Cardiac septum (tissue), 1 donor: ENCODE measurements at regions of chr1 and their contacts with region 1.

Region 1: DNA sequence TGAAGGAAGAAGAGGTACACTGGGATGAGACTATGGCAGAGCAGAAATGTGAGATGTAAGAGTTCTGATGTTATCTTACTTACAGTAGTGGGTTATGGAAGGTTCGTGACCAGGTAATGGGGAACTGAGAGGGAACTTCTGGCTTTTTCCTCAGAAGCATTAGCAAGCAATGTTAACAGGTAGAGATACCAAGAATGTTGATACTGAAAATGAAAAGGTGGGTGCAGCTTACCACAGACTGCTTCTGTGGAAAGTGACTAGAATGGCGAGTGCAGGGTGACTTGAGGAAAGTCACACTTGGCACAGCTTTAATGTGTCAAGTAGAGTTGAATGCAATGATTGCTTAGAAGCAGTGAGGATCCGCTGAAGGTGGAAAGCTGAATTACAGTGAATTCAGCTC is 70.8 kb downstream of the PLA2G4A start:
- DNase-seq: no peak

Region 2: GRCh38 chr1:186680245-186681061 is 219.1 kb before region 1 on chr1 and contains the start of gene PTGS2:
- intact Hi-C with region 1: loop called (anchors 10 kb)
- DNase-seq: peak; percentile 88
- total RNA-seq, gene PTGS2: 0.81 TPM

Region 3: GRCh38 chr1:186943891-186944686 is 44.5 kb after region 1 on chr1:
- intact Hi-C with region 1: no loop called
- DNase-seq: no peak

Region 4: DNA sequence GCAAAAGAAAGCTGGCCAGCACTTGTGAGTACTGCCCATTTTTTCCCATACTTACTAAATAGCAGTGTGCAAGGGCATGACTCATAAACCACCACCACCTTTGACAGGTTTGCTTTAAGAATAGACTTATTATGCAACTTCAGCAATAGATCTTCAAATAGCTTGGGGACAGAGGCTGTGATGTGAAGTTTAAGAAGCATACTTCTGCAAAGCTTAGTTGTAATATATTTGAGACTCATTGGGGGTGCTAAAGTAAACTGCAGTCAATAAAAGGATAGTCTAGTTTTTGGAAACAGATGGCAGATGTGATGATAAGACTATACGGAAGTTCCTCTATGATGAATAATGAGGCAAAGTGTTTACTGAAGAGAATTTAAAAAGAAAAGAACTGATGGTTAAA is 139.2 kb after region 1 on chr1:
- intact Hi-C with region 1: no loop called
- DNase-seq: no peak